Transverse colon (tissue), 4 donors: ENCODE measurements at regions of chr7 and their contacts with region 1.

Region 1: DNA sequence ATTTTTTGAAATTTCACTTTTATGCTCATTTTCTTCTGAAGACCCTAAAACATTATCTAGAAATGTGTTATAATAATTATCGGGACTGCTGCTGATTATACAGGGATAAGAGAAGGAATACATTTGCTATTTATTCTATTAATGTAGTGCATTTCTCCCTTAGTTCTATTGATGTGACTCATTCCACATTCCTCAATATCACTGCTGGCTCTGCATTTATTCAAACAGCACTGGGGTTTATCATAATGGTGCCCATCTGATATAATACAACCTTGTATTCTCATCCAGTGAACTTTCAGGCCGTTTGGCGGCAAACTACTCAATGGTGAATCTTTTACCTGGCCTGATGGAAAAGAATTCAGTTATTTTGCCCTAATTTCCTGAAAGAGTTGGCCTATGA is 7.8 kb downstream of the KCND2 start:
- DNase-seq: no peak
- H3K4me3 ChIP-seq: no peak overlapping the region
- H3K27ac ChIP-seq: no peak overlapping the region
- H3K4me1 ChIP-seq: no peaks in the 10 kb centered on the region
- H3K27me3 ChIP-seq: no peaks in the 10 kb centered on the region
- CTCF ChIP-seq: no peak
- EP300 ChIP-seq: no peak
- POLR2A ChIP-seq: no peak

Region 2: GRCh38 chr7:119545118-119545517 is 735.6 kb before region 1 on chr7:
- in situ Hi-C with region 1: no loop called
- intact Hi-C with region 1: loop called (anchors 5 kb)
- DNase-seq: no peak
- H3K4me3 ChIP-seq: no peak overlapping the region
- H3K27ac ChIP-seq: no peak overlapping the region
- H3K4me1 ChIP-seq: no peaks in the 10 kb centered on the region
- H3K27me3 ChIP-seq: no peaks in the 10 kb centered on the region
- CTCF ChIP-seq: no peak
- EP300 ChIP-seq: no peak
- POLR2A ChIP-seq: no peak

Region 3: GRCh38 chr7:119842786-119843185 is 438.0 kb before region 1 on chr7:
- in situ Hi-C with region 1: no loop called
- intact Hi-C with region 1: no loop called
- DNase-seq: no peak
- H3K4me3 ChIP-seq: no peak overlapping the region
- H3K27ac ChIP-seq: no peak overlapping the region
- H3K4me1 ChIP-seq: no peaks in the 10 kb centered on the region
- H3K27me3 ChIP-seq: no peaks in the 10 kb centered on the region
- CTCF ChIP-seq: no peak
- EP300 ChIP-seq: no peak
- POLR2A ChIP-seq: no peak

Region 4: DNA sequence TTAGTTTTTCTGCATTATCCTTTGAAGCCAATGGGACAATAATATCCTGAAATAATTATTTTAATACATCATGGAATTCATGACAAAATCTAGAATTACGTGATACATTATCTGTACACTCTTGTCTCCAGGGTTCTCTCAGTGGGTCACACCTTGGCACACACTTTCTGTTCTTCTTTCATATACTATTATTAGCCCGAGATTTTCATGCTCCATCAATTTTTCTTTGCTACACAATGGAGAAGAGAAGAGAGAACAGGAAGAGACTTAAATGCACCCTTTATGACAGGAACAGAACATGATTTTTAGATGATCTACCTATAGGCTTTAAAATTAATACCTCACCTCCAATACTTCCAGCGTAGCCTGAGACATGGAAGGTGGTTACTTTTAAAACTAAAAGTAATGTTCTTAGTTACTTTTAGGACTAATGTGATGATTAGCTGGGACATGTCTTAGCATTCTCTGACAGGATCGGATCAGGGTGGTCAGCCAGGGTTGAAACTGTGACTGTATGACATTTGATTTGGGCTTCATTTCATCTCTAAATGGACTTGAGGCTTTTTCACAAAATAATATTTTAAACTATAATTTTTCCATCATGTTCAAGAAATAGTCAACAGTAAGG is 899.8 kb after region 1 on chr7:
- in situ Hi-C with region 1: no loop called
- intact Hi-C with region 1: no loop called
- DNase-seq: no peak
- H3K4me3 ChIP-seq: no peak overlapping the region
- H3K27ac ChIP-seq: no peak overlapping the region
- H3K4me1 ChIP-seq: no peaks in the 10 kb centered on the region
- H3K27me3 ChIP-seq: no peaks in the 10 kb centered on the region
- CTCF ChIP-seq: no peak
- EP300 ChIP-seq: no peak
- POLR2A ChIP-seq: no peak